Heart left ventricle (tissue), 16 donors: ENCODE measurements at regions of chr5 and their contacts with region 1.

Region 1: GRCh38 chr5:66498791-66499207 is 97.4 kb upstream of the MAST4 start:
- DNase-seq: peak in 4 of 5 donors; percentile 31 to 38 (median 36)
- ATAC-seq: peak; percentile 77 to 91 (median 87)
- H3K4me3 ChIP-seq: no peak overlapping the region
- H3K27ac ChIP-seq: no peak overlapping the region
- H3K4me1 ChIP-seq: peaks cover 0 to 6% (median 0%) of the 10 kb centered on the region in 12 donors
- H3K27me3 ChIP-seq: no peaks in the 10 kb centered on the region
- CTCF ChIP-seq: peak in 10 of 12 donors; percentile 21 to 57 (median 42)
- POLR2A ChIP-seq: no peak

Region 2: DNA sequence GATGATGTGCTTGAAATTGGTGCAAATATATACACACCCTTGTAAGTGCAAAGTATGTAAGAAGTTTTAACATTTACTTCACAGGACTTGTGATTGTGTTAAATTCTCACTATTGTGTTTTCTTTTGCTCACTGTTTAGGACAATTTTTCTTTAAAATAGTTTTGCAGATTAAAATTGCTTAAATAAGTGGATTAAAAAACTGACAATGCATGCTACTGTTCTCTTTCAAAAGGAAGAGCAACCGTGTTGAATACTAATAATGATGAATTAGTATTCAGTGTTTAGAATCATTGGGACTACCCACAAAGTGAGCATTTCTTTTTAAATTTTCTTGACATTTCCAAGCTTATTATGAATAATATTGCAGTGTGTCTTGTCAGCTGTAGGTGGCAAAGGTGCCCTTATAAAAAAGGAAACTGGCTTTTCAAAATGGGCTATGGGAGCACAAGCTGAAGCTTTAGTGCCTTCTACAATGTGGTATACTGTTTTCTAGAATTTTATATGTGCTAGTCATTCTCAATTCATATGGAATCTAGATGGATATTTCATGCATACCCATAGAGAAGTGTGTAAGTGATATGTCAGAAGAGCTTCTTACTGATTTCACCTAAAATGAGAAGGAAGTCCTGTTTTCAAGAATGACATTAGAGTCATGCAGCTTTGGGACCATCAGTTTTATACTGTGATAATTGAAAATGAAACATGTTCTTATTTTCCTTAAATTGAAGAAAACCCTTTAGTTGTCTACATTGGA is 319.3 kb before region 1 on chr5:
- intact Hi-C with region 1: loop called in 1 of 10 experiments (anchors 5 kb)
- DNase-seq: no peak
- ATAC-seq: no peak
- H3K4me3 ChIP-seq: no peak overlapping the region
- H3K27ac ChIP-seq: no peak overlapping the region
- H3K4me1 ChIP-seq: peaks cover 0 to 6% (median 0%) of the 10 kb centered on the region in 12 donors
- H3K27me3 ChIP-seq: no peaks in the 10 kb centered on the region
- CTCF ChIP-seq: no peak
- POLR2A ChIP-seq: no peak

Region 3: GRCh38 chr5:66617226-66617861 is 118.5 kb after region 1 on chr5:
- intact Hi-C with region 1: no loop called
- DNase-seq: no peak
- ATAC-seq: peak; percentile 33 to 68 (median 60)
- H3K4me3 ChIP-seq: no peak overlapping the region
- H3K27ac ChIP-seq: peak overlapping the region in 4 of 12 donors; percentile 5 to 46 (median 28)
- H3K4me1 ChIP-seq: peaks cover 2 to 67% (median 23%) of the 10 kb centered on the region in 12 donors
- H3K27me3 ChIP-seq: no peaks in the 10 kb centered on the region
- CTCF ChIP-seq: no peak
- POLR2A ChIP-seq: no peak